A549 (cell line): ENCODE measurements at regions of chr20 and their contacts with region 1.

Region 1: GRCh38 chr20:34768096-34768495 is 57.4 kb downstream of the NCOA6 start:
- DNase-seq: no peak
- ATAC-seq: no peak
- H3K4me3 ChIP-seq: no peak overlapping the region
- H3K27ac ChIP-seq: no peak overlapping the region
- H3K4me1 ChIP-seq: no peaks in the 10 kb centered on the region
- CTCF ChIP-seq: no peak
- EP300 ChIP-seq: no peak
- POLR2A ChIP-seq: no peak
- RAD21 ChIP-seq: no peak

Region 2: GRCh38 chr20:34190679-34191090 is 577.4 kb before region 1 on chr20:
- CTCF ChIA-PET with region 1: interaction called, 17 read pairs
- POLR2A ChIA-PET with region 1: no interaction called
- DNase-seq: peak; percentile 82 to 88
- ATAC-seq: peak; percentile 97 to 99
- H3K4me3 ChIP-seq: no peak overlapping the region
- H3K27ac ChIP-seq: no peak overlapping the region
- H3K4me1 ChIP-seq: no peaks in the 10 kb centered on the region
- CTCF ChIP-seq: peak; percentile 82
- EP300 ChIP-seq: no peak
- POLR2A ChIP-seq: no peak
- RAD21 ChIP-seq: peak; percentile 91 to 93

Region 3: DNA sequence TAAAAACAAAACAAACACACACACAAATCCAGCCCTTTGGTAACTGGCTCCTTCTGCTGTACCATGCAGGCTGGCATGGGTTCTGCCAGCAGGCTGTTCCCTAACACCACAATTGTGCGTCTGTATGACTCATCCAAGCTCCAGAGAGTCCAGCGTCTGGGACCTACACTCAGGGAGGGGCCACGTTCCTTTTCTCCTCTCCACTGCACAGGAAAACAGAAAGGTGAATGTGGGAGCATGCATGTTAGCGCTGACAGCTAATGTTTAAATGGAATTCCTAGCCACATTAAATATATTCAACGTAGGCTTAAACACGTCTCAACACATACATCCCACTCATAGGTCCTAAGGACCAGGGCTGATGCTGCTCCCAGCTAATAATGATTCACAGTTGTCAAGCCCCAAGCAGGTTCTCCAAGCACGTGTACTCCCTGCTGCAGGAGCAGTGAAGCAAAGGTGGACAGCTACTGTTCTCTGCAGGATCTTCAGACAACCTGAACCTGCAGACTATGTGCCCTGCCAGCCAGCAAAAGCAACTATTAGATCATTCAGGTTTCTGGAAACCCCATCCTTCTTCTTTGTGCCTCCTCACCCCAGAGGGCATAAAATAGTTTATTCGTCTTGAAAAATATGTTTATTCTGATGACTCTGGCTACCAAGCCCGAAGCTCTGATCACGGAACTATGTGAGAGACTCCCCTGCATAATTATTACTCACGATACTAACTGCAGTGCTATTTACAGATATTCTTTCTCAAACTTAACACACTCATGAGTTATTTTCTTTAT is 188.7 kb before region 1 on chr20:
- CTCF ChIA-PET with region 1: interaction called, 62 read pairs
- POLR2A ChIA-PET with region 1: no interaction called
- DNase-seq: peak in 1 of 2 experiments; percentile 69
- ATAC-seq: peak; percentile 91 to 96
- H3K4me3 ChIP-seq: no peak overlapping the region
- H3K27ac ChIP-seq: no peak overlapping the region
- H3K4me1 ChIP-seq: peaks cover 15% of the 10 kb centered on the region; the same call in 2 of the 3 replicates
- CTCF ChIP-seq: peak; percentile 82
- EP300 ChIP-seq: no peak
- POLR2A ChIP-seq: no peak
- RAD21 ChIP-seq: peak; percentile 93 to 94

Region 4: DNA sequence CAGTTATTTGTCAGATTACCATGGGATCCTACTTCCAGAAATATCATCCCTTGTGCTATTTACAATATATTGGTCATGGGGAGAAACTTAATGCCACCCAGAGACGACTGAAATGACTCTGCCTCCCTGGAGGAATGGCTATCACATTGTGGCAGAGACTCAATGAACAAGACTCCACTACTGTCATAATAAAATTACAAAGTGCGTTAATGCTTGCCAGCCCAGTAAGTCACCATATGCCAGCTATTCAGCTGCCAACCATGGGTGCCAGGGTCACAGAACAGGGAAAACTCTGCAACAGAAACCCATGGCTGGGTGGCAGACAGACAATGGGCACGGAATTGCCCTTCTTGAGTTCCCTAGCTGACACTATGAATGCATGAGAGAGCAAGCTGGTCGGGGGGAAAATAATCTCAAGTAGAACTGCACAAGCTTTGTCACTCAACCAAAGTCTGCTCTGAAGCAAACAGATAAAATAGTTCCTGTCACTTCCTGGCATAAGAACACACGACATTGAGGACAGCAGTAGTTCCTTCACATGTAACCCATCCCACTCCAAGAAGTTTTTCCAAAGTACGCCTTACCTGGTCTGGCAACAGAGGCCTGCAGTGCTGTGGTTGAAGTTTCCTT is 31.9 kb before region 1 on chr20:
- CTCF ChIA-PET with region 1: interaction called, 18 read pairs
- POLR2A ChIA-PET with region 1: no interaction called
- DNase-seq: no peak
- ATAC-seq: no peak
- H3K4me3 ChIP-seq: no peak overlapping the region
- H3K27ac ChIP-seq: no peak overlapping the region
- H3K4me1 ChIP-seq: no peaks in the 10 kb centered on the region
- CTCF ChIP-seq: no peak
- EP300 ChIP-seq: no peak
- POLR2A ChIP-seq: no peak
- RAD21 ChIP-seq: no peak

Region 5: DNA sequence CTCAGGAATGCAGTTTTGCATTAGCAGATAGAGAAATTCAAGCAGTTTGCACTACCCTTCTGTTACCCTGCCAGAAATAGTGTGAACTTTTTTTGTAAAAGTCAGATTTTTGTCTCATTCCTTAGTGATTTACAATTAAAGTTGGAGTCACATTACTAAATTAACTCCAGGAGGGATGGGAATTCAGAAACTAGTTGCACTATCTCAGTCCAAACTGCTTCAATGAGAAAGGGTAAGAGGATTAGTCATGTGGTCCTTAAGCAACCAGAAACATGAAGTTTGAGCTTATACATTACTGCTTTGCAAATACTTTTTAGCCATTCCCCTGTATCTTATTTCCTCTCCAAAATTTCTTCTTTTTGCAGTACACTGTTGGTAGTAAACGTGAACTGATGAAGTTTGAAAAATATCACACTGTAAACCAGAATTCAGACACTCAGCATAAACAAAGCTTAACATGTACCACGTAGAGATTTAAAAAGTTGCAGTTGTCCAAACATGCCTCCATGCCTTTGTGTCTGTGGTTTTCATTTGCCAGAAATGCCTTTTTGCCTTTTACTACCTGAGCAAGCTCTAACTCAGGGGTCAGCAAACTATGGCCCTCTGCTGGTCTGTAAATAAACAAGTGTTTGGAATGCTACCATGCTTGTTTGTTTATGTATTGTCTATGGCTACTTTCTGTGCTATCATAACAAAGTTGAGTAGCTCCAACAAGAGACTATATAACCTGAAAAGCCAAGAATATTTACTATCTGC is 14.2 kb before region 1 on chr20:
- CTCF ChIA-PET with region 1: interaction called, 39 read pairs
- POLR2A ChIA-PET with region 1: no interaction called
- DNase-seq: no peak
- ATAC-seq: no peak
- H3K4me3 ChIP-seq: no peak overlapping the region
- H3K27ac ChIP-seq: no peak overlapping the region
- H3K4me1 ChIP-seq: no peaks in the 10 kb centered on the region
- CTCF ChIP-seq: no peak
- EP300 ChIP-seq: no peak
- POLR2A ChIP-seq: no peak
- RAD21 ChIP-seq: no peak